PC-9 (cell line): ENCODE measurements at regions of chr19 and their contacts with region 1.

Region 1: DNA sequence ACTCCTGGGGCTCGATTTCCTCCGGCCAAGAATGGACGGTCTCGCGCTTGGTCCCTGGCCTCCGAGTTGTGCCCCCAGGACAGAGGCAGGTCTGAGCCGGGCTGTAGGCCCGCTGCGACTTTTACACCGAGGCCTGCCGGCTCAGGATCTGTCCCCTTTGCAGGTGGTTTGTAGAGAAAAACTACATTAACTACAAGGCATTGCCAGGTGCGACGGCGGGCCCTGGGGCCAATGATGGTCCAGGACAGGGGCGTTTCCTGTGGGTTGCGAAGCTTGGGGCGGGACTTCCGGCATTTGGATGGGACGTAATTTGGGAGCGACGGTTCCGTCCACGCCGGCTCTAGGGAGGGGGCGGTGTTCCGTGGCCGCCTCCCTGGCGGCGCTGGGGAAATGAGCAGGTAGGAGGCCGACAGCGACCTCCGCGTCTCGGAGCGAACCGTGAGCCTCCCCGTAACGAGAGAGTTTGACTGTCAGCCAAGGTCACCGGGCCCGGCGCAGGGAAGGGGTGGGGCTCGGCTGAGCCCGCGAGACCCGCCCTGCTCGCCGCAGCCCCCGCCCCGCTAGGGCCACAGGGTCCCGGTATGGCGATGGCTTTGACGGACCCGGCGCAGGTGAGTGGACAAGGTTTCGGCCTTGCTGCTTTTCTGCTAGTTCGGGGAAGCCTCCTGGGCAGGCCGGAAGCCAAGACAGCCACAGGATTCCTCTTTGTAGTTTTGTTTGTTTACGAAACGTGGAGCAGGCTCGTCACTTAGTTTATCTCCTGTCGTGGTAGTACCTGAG is at the start of gene ZNF805:
- DNase-seq: peak; percentile 82 to 94
- H3K4me3 ChIP-seq: peak within 1 kb of the TSS; percentile 95
- H3K27ac ChIP-seq: peak within 1 kb of the TSS; percentile 69
- H3K4me1 ChIP-seq: peaks cover 17% of the 10 kb centered on the region; the same call in 1 of the 2 replicates
- H3K27me3 ChIP-seq: no peaks in the 10 kb centered on the region
- CTCF ChIP-seq: no peak
- total RNA-seq, gene ZNF805: 13.5 and 19.8 TPM in 2 replicates

Region 2: DNA sequence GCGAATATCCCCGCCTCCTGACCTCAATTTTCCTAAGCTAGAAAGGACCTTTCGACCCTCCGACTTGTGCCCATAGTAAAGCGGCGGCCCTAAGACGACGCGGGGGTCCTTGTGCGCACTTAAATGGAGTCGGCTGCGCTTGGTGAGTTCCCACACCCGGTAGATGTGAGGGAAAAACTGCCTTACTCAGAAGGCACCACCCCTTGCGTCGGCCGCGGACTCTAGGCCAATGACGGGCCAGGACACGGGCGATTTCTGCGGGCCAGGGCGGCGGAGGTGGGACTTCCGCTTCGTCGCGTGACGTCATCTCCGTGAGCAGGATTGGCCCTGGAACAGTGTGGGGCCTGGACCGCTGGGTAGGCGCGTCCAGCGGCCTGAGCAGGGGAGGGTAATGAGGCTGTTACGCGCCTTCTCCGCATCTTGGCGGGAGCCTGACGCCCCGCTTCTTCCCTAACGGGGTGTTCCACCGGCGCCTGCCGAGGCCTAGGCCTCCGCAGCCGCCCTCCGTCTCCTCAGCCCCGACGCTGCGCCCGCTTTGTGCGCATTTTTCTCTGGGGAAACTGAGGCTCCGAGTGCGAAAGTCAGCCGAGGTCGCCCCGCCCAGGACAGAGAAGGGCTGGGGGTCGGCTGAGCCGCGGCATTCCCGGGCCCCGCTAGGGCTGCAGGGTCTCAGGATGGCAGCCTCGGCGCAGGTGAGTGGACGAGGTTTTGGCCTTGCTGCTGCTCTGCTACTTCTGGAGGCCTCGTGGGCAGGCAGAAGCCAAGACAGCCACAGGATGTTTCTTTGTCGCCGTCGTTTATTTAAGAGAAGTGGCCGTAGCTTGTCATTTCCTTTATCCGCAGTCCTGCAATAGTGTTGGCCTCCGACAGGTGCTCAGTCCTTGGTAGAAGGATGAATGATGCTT is 79.9 kb after region 1 on chr19 and contains the start of gene ZNF543:
- CTCF ChIA-PET with region 1: no interaction called
- POLR2A ChIA-PET with region 1: interaction called, 3 read pairs
- intact Hi-C with region 1: loop called (anchors 1 kb)
- DNase-seq: peak; percentile 92 to 96
- H3K4me3 ChIP-seq: peak within 1 kb of the TSS; percentile 91
- H3K27ac ChIP-seq: peak within 1 kb of the TSS; percentile 51
- H3K4me1 ChIP-seq: peaks cover 19% of the 10 kb centered on the region
- H3K27me3 ChIP-seq: no peaks in the 10 kb centered on the region
- CTCF ChIP-seq: no peak
- total RNA-seq, gene ZNF543: 8.9 and 9.5 TPM in 2 replicates

Region 3: DNA sequence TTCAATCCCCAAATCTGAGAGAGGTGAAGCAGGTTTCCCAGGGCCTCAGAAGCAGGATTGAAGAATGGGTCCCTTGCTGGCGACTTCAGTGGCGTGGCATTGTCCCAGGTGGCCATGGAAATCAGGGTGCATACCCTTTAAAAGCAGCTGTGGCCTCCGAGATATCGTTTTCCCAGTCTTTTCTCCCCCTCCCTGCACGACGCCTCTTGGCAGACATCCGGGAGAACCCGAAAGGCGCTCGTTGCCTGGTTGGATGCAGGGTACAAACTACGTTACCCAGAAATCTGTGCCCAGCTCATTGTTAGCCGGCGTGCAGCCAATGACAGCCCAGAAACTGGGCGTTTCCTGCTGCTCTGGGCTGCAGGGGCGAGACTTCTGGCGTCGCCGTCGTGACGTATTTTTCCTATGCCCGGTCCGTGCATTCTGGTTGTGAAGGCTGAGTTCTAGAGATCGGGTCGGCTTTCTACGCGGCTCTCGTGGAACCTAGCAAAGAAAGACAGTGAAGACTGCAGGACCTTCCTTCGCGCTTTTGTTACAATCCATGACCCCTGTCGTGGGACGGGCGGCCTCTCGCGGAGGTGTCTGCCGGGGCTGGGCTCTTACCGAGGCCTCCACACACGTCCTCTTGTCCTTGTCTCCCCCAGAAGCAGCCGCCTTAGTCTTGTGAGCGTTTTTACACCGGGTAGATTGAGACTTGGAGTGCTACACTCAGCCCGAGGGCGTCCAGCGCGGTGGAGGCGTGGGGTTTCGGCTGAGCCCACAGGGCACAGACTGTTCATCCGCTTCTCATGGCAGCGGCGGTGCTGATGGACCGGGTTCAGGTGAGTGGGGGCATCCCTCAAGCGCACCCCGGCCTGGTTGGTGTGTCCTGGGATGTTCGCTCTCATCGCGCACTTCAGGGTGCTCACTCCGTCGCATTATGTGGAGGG is 110.6 kb after region 1 on chr19 and contains the start of gene ZNF304:
- CTCF ChIA-PET with region 1: no interaction called
- POLR2A ChIA-PET with region 1: interaction called, 7 read pairs
- intact Hi-C with region 1: loop called (anchors 5 kb)
- DNase-seq: peak; percentile 94 to 95
- H3K4me3 ChIP-seq: peak within 1 kb of the TSS; percentile 95
- H3K27ac ChIP-seq: 0 out of 2 replicates have a peak within 1 kb of the TSS, but pooled peaks have one; percentile 16
- H3K4me1 ChIP-seq: peaks cover 10% of the 10 kb centered on the region
- H3K27me3 ChIP-seq: no peaks in the 10 kb centered on the region
- CTCF ChIP-seq: no peak
- total RNA-seq, gene ZNF304: 10.9 and 11.4 TPM in 2 replicates

Region 4: DNA sequence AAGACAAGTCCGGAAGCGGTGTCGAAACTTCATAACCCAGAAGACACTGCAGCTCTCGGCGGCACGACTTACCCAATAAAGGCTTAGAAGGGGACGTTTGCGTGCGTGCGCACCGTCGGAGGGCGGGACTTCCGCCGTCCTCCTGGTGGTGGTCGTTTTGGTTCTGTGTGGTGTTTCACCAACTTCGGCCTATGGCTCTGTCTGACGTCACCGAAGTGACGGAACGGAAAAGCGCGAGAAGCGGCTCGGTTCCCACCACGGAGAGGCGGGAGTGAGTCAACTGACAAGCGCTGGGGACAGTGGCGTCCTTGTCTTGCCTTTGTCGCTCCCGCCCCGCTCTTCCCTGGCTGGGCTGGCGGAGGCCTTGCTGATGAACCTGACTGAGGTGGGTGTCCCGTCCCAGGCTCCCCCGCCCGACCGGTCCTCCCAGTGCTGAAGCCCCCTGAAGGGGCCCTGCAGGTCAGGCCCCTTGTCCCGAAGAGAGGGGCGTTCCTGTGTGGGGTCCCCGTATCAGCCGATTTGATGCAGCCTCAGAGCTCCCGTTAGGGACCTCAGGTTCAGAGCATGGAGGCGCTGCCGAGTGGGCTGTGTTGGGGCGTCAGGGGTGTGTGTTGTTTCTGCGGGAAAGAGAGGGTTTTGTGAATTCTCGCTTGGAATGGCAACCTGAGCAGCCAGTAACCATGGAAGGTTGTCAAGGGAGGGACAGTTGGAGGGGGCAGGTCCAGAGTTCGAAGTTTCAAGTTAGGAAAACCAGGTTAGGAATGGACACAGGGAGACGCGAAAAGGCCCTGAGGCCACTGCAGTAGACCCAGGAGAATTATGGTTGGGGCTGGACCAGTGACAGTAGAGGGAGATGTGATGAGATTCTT is 149.5 kb after region 1 on chr19 and contains the start of gene ZNF548:
- CTCF ChIA-PET with region 1: no interaction called
- POLR2A ChIA-PET with region 1: no interaction called
- intact Hi-C with region 1: loop called (anchors 1 kb)
- DNase-seq: peak; percentile 95 to 97
- H3K4me3 ChIP-seq: peak within 1 kb of the TSS; percentile 66
- H3K27ac ChIP-seq: peak within 1 kb of the TSS; percentile 28
- H3K4me1 ChIP-seq: peaks cover 15% of the 10 kb centered on the region
- H3K27me3 ChIP-seq: no peaks in the 10 kb centered on the region
- CTCF ChIP-seq: no peak
- total RNA-seq, gene ZNF548: 18.0 and 18.2 TPM in 2 replicates

Region 5: DNA sequence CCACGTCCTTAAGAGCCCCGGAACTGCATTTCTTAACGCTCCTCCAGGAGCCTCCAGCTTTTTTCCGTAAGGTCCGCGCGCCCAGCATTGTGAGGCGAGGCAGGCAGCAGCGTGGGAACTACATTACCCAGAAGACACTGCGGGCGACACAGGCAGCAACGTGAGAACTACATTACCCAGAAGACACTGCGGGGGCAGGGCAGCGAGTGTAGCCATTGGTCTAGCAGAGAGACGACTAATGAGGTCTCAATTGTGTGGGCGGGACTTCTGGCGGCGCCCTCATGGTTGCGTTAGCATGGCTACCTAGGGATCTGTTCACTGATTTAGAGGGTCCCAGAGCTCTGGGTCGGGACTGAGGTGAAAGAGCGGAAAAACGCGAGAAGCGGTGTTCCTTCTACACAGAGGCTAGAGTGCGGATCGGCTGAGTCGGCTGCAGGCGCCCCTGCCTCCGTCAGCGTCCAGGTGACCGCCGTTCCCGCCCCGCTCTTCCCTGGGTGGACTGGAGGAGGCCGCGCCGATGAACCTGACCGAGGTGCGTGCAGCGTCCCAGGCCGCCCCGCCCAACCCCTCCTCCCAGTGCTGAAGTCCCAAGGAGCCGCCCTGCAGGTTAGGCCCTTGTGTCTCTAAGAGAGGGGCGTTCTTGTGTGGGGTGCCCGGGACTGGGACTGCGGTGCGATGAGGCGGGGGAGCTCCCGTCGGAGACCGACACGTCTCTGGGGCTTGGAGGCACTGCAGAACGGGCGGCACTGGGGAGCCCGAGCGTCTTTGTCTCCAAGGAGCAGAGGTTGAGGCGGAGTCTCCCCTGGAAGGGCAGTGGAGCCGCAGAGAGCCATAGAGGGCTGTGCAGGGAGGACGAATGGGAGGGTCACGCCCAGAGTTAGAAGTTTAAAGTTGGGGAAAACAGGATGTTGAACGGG is 194.8 kb after region 1 on chr19 and contains the start of gene ZNF749:
- CTCF ChIA-PET with region 1: no interaction called
- POLR2A ChIA-PET with region 1: no interaction called
- intact Hi-C with region 1: loop called (anchors 2 kb)
- DNase-seq: peak; percentile 97
- H3K4me3 ChIP-seq: peak within 1 kb of the TSS; percentile 81
- H3K27ac ChIP-seq: peak within 1 kb of the TSS; percentile 33
- H3K4me1 ChIP-seq: peaks cover 16% of the 10 kb centered on the region
- H3K27me3 ChIP-seq: no peaks in the 10 kb centered on the region
- CTCF ChIP-seq: no peak
- total RNA-seq, gene ZNF749: 17.9 and 19.4 TPM in 2 replicates